AG04449 (cell line): ENCODE measurements at regions of chr16 and their contacts with region 1.

Region 1: GRCh38 chr16:10964039-10964890 is 19.9 kb downstream of the CLEC16A start:
- DNase-seq: no peak
- H3K4me3 ChIP-seq: no peak overlapping the region
- CTCF ChIP-seq: peak; percentile 95

Region 2: GRCh38 chr16:10944249-10945064 is 19.8 kb before region 1 on chr16 and contains the start of gene CLEC16A:
- CTCF ChIA-PET with region 1: interaction called, 215 read pairs
- POLR2A ChIA-PET with region 1: no interaction called
- DNase-seq: peak; percentile 70
- H3K4me3 ChIP-seq: peak within 1 kb of the TSS; percentile 86
- CTCF ChIP-seq: no peak

Region 3: GRCh38 chr16:10981697-10982216 is 17.5 kb after region 1 on chr16:
- CTCF ChIA-PET with region 1: interaction called, 31 read pairs
- POLR2A ChIA-PET with region 1: no interaction called
- DNase-seq: no peak
- H3K4me3 ChIP-seq: no peak overlapping the region
- CTCF ChIP-seq: peak; percentile 19

Region 4: DNA sequence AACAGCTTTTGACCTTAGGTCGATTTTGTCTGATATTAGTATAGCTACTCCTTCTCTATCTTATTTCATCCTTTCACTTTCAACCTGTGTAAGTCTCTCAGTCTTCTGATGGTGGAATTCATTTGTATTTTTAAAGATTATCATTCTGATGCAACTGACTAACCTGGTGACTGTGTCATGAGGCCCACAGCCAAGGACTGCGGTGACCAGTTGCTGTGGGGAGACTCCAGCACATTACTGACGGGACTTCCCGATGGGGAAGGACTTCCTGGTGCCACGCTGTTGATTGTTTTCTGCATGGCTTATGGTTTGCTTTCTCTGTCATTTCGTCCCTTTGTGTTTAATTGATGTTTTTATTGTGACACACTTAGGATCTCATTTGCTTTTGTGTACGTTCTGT is 415.2 kb after region 1 on chr16:
- CTCF ChIA-PET with region 1: interaction called, 10 read pairs
- POLR2A ChIA-PET with region 1: no interaction called
- DNase-seq: no peak
- H3K4me3 ChIP-seq: no peak overlapping the region
- CTCF ChIP-seq: no peak

Region 5: GRCh38 chr16:11396241-11397048 is 432.2 kb after region 1 on chr16:
- CTCF ChIA-PET with region 1: interaction called, 19 read pairs
- POLR2A ChIA-PET with region 1: no interaction called
- DNase-seq: no peak
- H3K4me3 ChIP-seq: no peak overlapping the region
- CTCF ChIP-seq: peak; percentile 98